Left cardiac atrium (tissue), 4 donors: ENCODE measurements at regions of chr6 and their contacts with region 1.

Region 1: GRCh38 chr6:105263685-105264610 is 84.1 kb upstream of the POPDC3 start:
- DNase-seq: no peak
- ATAC-seq: peak in 1 of 2 donors; percentile 31

Region 2: DNA sequence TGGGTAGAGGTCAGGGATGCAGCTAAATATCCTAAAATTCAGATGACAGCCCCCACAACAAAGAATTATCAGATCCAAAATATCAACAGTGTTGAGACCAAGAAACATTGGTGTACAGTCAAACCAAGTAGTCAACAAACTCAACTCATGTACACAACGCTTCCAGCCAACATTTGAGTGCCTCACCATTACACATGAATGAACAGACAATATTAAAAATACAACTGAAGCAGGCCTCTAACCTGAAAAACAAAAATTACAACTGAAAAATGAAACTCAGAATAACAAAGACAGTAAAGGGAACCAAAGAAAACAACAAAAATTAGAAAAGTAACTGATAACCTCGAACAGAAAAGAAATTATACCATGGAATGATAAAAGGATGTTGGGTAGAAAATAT is 450.4 kb before region 1 on chr6:
- intact Hi-C with region 1: no loop called
- DNase-seq: no peak
- ATAC-seq: no peak

Region 3: GRCh38 chr6:104983281-104983680 is 280.7 kb before region 1 on chr6:
- intact Hi-C with region 1: no loop called
- DNase-seq: no peak
- ATAC-seq: no peak

Region 4: DNA sequence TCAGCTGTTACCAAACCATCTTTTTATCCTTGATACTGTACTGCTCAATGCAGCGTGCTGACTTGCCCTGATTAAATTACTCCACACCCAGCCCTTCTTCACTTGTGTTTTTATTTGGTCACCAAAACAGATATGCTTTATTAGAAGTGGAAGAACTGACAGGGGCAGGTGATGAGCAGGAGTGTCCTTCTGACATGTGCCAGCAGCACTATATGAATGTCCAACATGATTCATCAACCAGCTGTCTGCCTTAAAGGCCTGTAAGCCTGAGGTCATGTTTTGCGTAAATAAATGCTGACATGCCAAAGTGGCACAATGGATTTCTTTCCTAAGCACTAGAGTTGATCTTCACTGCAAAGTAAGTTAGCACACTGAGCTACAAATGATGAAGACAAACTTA is 99.5 kb before region 1 on chr6:
- intact Hi-C with region 1: loop called in 1 of 2 experiments (anchors 10 kb)
- DNase-seq: peak; percentile 22
- ATAC-seq: peak; percentile 82 to 94

Region 5: DNA sequence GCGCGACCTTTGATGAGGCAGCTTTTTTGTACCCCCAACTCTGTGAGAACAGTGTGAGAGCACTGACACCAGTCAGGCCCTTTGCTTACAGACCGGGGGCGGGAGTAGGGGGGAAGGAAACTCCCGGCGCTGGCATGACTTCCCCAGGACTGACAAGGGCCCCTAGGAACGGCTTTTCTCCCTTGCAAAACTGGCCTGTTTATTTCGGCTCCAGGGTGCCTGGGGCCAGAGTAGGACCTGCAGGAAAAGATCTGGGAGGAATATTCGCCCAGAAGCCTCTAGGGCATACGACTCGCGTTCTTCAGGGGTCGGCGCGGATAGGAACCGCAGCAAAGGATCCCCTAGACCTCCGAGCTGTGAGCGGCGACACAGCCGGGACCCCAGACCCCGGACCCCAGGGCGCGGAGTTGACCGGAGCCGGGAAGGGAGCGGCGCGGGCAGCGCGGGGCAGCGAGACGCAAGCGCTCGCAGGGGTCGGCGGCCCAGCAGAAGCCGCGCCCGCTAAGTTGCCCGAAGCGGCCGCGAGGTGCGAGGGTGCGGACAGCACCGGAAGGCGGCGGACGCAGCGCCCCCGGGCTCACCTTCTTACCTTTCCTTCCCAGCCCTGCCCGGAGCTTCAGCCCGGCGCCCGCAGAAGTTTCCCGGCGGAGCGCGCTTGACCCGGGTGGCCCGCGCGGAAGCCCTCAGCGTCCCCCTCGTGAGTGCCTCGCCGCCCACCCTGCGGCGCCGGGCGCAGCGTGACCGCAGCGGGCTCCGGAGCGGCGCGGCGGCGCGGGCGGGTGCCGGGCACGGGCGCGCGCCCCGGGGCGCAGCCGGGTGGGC is 84.5 kb before region 1 on chr6 and contains the start of gene POPDC3:
- intact Hi-C with region 1: loop called in 1 of 2 experiments (anchors 5 kb)
- DNase-seq: peak; percentile 20
- ATAC-seq: peak; percentile 77 to 90
- total RNA-seq, gene POPDC3: 34.5 to 35.5 TPM